Activated CD4-positive, alpha-beta memory T cell treated with anti-CD3 and anti-CD28 coated beads for 36 hours (primary cell): ENCODE measurements at regions of chr6 and their contacts with region 1.

Region 1: GRCh38 chr6:57089687-57090460 is at the start of gene ZNF451:
- DNase-seq: peak; percentile 99
- H3K4me3 Mint-ChIP-seq: peak within 1 kb of the TSS; percentile 85
- H3K27ac Mint-ChIP-seq: peak within 1 kb of the TSS; percentile 92
- H3K4me1 Mint-ChIP-seq: peaks cover 30% of the 10 kb centered on the region
- H3K27me3 Mint-ChIP-seq: no peaks in the 10 kb centered on the region
- total RNA-seq, gene ZNF451: 38.2 to 41.4 TPM

Region 2: GRCh38 chr6:56356426-56356825 is 733.4 kb before region 1 on chr6:
- CTCF ChIA-PET with region 1: no interaction called
- POLR2A ChIA-PET with region 1: no interaction called
- intact Hi-C with region 1: no loop called
- DNase-seq: no peak
- H3K4me3 Mint-ChIP-seq: no peak overlapping the region
- H3K27ac Mint-ChIP-seq: no peak overlapping the region
- H3K4me1 Mint-ChIP-seq: peaks cover 6% of the 10 kb centered on the region
- H3K27me3 Mint-ChIP-seq: peaks cover 2% of the 10 kb centered on the region

Region 3: GRCh38 chr6:56796196-56796532 is 293.7 kb before region 1 on chr6:
- CTCF ChIA-PET with region 1: no interaction called
- POLR2A ChIA-PET with region 1: no interaction called
- intact Hi-C with region 1: no loop called
- DNase-seq: no peak
- H3K4me3 Mint-ChIP-seq: no peak overlapping the region
- H3K27ac Mint-ChIP-seq: no peak overlapping the region
- H3K4me1 Mint-ChIP-seq: no peaks in the 10 kb centered on the region
- H3K27me3 Mint-ChIP-seq: peaks cover 2% of the 10 kb centered on the region

Region 4: GRCh38 chr6:57048577-57048976 is 41.3 kb before region 1 on chr6:
- CTCF ChIA-PET with region 1: no interaction called
- POLR2A ChIA-PET with region 1: interaction called, 4 read pairs
- intact Hi-C with region 1: loop called (anchors 1 kb)
- DNase-seq: no peak
- H3K4me3 Mint-ChIP-seq: peak overlapping the region; percentile 64
- H3K27ac Mint-ChIP-seq: no peak overlapping the region
- H3K4me1 Mint-ChIP-seq: peaks cover 19% of the 10 kb centered on the region
- H3K27me3 Mint-ChIP-seq: peaks cover 10% of the 10 kb centered on the region